Pancreas (tissue), 10 donors: ENCODE measurements at regions of chr2 and their contacts with region 1.

Region 1: GRCh38 chr2:222561817-222562645 is 93.9 kb downstream of the FARSB start:
- DNase-seq: peak in 3 of 6 donors; percentile 13 to 29 (median 28)
- ATAC-seq: peak; percentile 38 to 83 (median 79)
- H3K4me3 ChIP-seq: no peak overlapping the region
- H3K27ac ChIP-seq: no peak overlapping the region
- H3K4me1 ChIP-seq: no peaks in the 10 kb centered on the region
- H3K27me3 ChIP-seq: no peaks in the 10 kb centered on the region
- CTCF ChIP-seq: peak in 3 of 4 donors; percentile 11 to 44 (median 42)

Region 2: DNA sequence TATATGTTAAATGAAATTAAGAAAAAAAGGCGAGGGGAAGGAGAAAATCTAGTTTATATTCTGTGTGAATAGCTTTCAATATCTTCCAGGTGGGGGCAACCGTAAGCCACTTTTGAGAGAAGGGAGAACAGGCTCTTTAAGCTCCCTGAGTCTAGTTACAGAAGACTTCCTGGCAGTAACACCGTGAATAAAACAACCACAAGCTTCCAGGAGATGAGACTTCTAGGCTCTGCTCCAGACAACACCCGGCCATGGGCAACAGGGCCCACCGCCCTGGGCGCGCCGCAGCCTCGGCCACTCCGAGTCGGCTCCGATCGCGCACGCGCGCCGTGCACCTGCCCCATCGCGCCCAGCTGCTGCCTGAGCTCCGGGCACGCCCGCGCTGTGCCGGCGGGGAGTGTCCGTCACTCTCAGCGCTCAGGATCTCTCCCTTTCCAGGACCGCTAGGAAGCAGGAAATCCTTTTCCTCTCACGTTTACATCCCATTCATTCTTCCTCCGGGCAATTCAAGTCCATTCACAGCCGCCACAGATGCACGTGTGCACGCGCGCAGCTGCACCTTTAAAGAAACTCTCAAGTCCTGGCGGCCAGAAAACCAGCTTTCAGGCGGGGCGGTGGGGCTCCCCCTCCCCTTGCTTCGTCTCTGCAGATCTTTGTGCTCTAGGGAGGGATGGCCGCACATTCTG is 243.9 kb before region 1 on chr2:
- intact Hi-C with region 1: loop called in 1 of 3 experiments (anchors 10 kb)
- DNase-seq: peak in 4 of 6 donors; percentile 33 to 84 (median 53)
- ATAC-seq: peak; percentile 78 to 91 (median 85)
- H3K4me3 ChIP-seq: peak overlapping the region in 3 of 4 donors; percentile 23 to 49 (median 34)
- H3K27ac ChIP-seq: no peak overlapping the region
- H3K4me1 ChIP-seq: peaks cover 0 to 5% (median 0%) of the 10 kb centered on the region in 3 donors
- H3K27me3 ChIP-seq: peaks cover 0 to 39% (median 9%) of the 10 kb centered on the region in 4 donors
- CTCF ChIP-seq: peak in 3 of 4 donors; percentile 8 to 25 (median 10)